GM12878 (cell line): ENCODE measurements at regions of chr20 and their contacts with region 1.

Region 1: GRCh38 chr20:37316116-37316774 is 26.8 kb downstream of the MANBAL start:
- DNase-seq: no peak
- ATAC-seq: peak; percentile 91
- H3K4me3 ChIP-seq: no peak overlapping the region
- H3K27ac ChIP-seq: peak overlapping the region; percentile 93
- H3K4me1 ChIP-seq: peaks cover 33% of the 10 kb centered on the region
- H3K27me3 ChIP-seq: no peaks in the 10 kb centered on the region
- CTCF ChIP-seq: no peak
- EP300 ChIP-seq: 0 out of 4 replicates have a peak, but pooled peaks of 1 of the 2 experiments have one; percentile 22
- POLR2A ChIP-seq: no peak; the same call in 1 of the 2 replicates
- RAD21 ChIP-seq: no peak

Region 2: DNA sequence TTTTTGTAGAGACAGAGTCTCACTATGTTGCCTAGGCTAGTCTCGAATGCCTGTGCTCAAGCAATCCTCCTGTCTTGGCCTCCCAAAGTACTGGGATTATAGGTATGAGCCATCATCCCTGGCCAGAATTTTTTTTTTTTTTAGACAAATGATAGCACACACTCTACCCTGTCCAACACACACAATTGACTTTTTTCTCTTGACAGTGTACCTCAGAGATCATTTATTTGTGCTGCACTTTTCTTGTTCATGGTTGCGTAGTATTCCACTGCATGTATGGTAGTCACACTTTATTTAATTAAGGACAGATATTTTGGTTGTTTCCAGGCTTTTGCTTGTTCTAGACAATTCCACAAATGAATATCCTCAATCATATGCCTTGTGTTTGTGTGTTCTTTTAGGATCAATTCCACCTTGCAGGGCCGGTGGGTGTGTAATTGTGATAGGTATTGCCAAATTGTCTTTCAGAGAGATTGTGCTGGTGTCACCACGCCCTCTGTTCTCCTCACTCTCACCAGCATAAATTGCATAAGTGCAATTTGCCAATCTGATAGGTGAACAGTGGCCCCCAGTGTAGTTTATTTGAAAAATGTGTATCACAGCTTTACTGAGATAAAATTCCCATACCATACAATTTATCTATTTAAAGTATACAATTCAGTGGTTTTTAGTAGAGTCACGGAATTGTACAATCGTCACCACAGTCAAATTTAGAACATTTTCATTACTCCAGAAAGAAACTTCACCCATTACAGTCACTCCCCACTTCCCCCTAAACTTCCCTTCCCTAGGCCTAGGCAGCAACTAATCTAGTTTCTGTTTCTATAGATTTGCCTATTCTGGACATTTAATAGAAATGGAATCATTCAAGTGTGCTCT is 49.8 kb after region 1 on chr20:
- CTCF ChIA-PET with region 1: no interaction called
- POLR2A ChIA-PET with region 1: no interaction called
- RAD21 ChIA-PET with region 1: no interaction called
- SMC1A ChIA-PET with region 1: no interaction called
- in situ Hi-C with region 1: loop called (anchors 5 kb)
- intact Hi-C with region 1: no loop called
- DNase-seq: peak; percentile 90
- ATAC-seq: peak; percentile 86
- H3K4me3 ChIP-seq: peak overlapping the region; percentile 2; the same call in 1 of the 2 replicates
- H3K27ac ChIP-seq: peak overlapping the region; percentile 87
- H3K4me1 ChIP-seq: peaks cover 74% of the 10 kb centered on the region
- H3K27me3 ChIP-seq: no peaks in the 10 kb centered on the region
- CTCF ChIP-seq: peak in 1 of 3 experiments; percentile 2; a peak in 1 of 6 replicates
- EP300 ChIP-seq: peak; percentile 77 to 79; a peak in 3 of 4 replicates
- POLR2A ChIP-seq: no peak
- RAD21 ChIP-seq: peak; percentile 57

Region 3: DNA sequence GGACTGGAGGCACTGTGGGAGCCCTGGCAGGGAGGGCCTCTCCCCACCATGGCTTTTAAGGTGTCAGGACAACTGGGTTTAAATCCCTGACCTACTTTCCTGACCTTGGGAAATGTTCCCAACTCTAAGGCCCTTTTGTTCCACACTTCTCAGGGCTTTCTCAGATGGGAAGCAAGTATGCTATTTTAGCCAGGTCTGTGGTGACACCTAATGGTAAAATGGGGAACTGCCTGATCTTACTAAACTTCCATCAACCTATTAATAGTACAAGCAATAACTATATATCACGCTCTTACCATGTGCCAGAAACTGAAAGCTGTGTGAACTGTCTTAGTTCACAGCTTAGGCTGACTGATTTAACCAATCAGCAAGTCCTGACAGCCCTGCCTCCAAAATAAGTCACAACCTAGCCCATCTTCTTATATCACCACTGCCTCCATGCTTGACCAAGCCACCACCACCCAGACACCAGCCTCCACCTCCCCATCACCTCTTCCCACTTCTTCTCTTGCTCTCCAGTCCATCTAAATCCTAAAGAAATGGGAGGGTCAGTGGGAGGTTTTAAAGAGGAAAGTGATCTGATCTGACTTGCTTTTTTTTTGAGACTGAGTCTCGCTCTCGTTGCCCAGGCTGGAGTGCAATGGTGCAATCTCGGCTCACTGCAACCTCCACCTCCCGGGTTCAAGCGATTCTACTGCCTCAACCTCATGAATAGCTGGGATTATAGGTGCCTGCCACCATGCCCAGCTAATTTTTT is 218.3 kb after region 1 on chr20:
- CTCF ChIA-PET with region 1: no interaction called
- POLR2A ChIA-PET with region 1: no interaction called
- RAD21 ChIA-PET with region 1: no interaction called
- SMC1A ChIA-PET with region 1: no interaction called
- in situ Hi-C with region 1: no loop called
- intact Hi-C with region 1: no loop called
- DNase-seq: peak; percentile 90
- ATAC-seq: peak; percentile 98
- H3K4me3 ChIP-seq: no peak overlapping the region
- H3K27ac ChIP-seq: peak overlapping the region; percentile 57
- H3K4me1 ChIP-seq: peaks cover 18% of the 10 kb centered on the region
- H3K27me3 ChIP-seq: no peaks in the 10 kb centered on the region
- CTCF ChIP-seq: peak; percentile 69 to 88 (median 77)
- EP300 ChIP-seq: peak; percentile 47 to 59; a peak in 2 of 4 replicates
- POLR2A ChIP-seq: no peak
- RAD21 ChIP-seq: peak; percentile 97